ENCODE measurements at regions of chr10 and their contacts with region 1.

Region 1: DNA sequence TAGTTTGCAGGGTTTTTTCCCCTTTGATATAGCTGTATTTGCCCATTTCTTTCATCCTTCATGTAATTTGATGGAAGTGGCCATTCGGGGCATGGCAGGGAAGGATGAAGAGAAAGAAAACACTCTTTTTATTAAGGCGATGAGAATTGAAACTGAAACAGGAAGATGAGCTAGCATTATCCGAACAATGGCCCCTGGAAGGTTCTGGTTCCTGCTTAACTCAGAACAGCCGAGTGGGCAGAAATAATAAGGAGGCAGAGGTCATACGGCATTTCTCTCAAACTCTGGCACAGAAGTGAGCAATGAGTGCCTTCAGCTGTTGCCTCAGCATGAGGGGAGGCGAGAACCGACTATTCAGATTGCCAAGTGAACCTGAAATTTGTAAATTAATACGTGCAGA is 113.2 kb upstream of the MYO3A start:
- DNase-seq: no peak
- H3K4me3 ChIP-seq: no peak overlapping the region
- H3K27ac ChIP-seq: no peak overlapping the region
- H3K4me1 ChIP-seq: no peaks in the 10 kb centered on the region
- H3K27me3 ChIP-seq: no peaks in the 10 kb centered on the region
- CTCF ChIP-seq: no peak
- EP300 ChIP-seq: no peak
- POLR2A ChIP-seq: no peak

Region 2: GRCh38 chr10:25232204-25232603 is 588.7 kb before region 1 on chr10:
- intact Hi-C with region 1: loop called in 1 of 4 experiments (anchors 5 kb)
- DNase-seq: no peak
- H3K4me3 ChIP-seq: no peak overlapping the region
- H3K27ac ChIP-seq: no peak overlapping the region
- H3K4me1 ChIP-seq: no peaks in the 10 kb centered on the region
- H3K27me3 ChIP-seq: no peaks in the 10 kb centered on the region
- CTCF ChIP-seq: no peak
- EP300 ChIP-seq: no peak
- POLR2A ChIP-seq: no peak

Region 3: DNA sequence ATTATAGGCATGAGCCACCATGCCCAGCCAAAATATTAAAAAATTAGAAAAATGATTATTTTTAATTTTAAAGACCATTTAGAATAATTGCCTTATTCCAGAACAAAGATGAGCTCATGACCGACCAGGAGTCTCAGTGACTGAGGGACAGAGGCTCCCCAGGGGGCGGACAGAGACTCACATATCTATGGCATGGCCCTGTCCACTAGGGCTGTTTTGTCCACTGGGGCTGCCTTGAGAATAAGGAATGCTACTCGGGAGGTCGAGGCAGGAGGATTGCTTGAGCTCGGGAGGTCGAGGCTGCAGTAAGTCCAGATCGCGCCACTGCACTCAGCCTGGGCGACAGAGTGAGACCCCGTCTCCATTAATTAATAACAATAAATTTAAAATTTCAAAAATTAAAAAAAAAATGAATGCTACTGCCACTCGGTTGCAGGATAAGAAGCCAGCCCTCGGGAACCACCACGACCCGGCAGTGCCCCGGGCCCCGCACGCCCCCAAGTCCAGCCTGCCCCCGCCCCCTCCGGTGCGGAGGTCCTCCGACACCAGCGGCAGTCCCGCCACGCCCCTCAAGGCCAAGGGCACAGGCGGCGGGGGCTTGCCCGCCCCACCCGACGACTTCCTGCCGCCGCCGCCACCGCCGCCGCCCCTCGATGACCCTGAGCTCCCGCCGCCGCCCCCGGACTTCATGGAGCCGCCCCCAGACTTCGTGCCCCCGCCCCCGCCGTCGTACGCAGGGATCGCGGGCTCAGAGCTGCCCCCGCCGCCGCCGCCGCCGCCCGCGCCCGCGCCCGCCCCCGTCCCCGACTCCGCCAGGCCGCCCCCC is 745.9 kb after region 1 on chr10:
- intact Hi-C with region 1: no loop called
- DNase-seq: no peak
- H3K4me3 ChIP-seq: peak overlapping the region; percentile 24
- H3K27ac ChIP-seq: no peak overlapping the region
- H3K4me1 ChIP-seq: no peaks in the 10 kb centered on the region
- H3K27me3 ChIP-seq: no peaks in the 10 kb centered on the region
- CTCF ChIP-seq: no peak
- EP300 ChIP-seq: no peak
- POLR2A ChIP-seq: no peak

Measured in ovary (tissue), 10 donors.